Heart right ventricle (tissue), 16 donors: ENCODE measurements at regions of chr4 and their contacts with region 1.

Region 1: DNA sequence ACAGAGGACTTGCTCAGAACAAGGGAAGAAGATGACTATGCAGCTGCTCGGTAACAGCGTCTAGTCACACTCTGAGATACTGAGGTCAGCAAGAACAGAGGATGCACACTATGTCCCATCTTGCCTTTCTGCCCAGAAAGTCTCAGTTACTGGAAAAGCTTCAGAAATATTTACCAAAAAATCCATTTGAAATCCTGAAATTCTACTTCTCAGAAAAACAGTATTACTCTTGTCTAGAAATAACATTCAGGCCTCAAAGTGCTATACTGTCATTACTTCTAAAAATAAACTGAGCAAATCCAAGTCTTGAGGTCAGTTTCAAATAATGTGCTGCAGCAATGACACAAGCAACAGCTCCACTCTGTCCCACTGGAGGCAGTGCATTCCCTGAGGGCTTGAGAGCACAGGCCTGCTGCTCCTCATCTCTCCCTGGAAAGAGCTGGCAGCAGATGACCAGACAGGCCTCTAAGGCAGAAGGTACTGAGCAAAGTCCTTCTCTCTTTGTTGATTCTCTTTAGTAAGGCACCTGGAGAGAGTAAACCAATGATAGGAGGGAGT is 76.9 kb downstream of the CAMK2D start:
- DNase-seq: peak; percentile 54 to 85
- ATAC-seq: peak; percentile 93 to 98 (median 94)
- H3K4me3 ChIP-seq: no peak overlapping the region
- H3K27ac ChIP-seq: peak overlapping the region; percentile 36 to 86 (median 74)
- H3K4me1 ChIP-seq: peaks cover 0 to 75% (median 52%) of the 10 kb centered on the region in 9 donors
- H3K27me3 ChIP-seq: no peaks in the 10 kb centered on the region
- CTCF ChIP-seq: peak in 8 of 9 donors; percentile 16 to 62 (median 44)

Region 2: DNA sequence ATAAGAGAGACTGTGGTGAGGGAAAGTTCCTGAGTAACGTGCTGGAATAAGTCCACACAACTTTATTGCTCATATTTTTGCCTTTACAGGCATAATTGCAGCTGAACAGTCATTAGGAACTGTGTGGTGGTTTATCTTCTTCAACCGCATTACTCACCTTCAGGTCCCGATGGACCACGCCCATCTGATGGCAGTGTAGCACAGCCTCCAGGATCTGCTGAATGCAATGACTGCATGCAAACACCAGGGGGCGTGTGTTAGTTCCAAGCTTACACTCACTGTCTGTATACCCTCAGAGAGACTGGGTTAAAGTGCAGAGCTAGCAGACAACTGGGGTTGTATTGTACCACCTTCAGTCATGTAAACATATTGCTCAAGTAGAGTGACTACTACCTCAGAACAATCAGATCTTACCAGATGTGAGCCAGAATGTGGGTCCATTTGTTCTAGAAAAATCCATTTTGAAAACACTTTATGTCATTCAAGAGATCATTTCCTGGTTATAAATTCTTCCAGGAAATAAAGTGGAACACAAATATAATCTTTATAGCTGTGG is 137.0 kb before region 1 on chr4:
- intact Hi-C with region 1: loop called in 4 of 10 experiments (anchors 5 to 10 kb)
- DNase-seq: peak; percentile 74 to 88
- ATAC-seq: peak; percentile 93 to 99 (median 98)
- H3K4me3 ChIP-seq: no peak overlapping the region
- H3K27ac ChIP-seq: peak overlapping the region in 9 of 10 donors; percentile 20 to 74 (median 47)
- H3K4me1 ChIP-seq: peaks cover 0 to 22% (median 13%) of the 10 kb centered on the region in 9 donors
- H3K27me3 ChIP-seq: no peaks in the 10 kb centered on the region
- CTCF ChIP-seq: peak; percentile 87 to 99 (median 98)

Region 3: DNA sequence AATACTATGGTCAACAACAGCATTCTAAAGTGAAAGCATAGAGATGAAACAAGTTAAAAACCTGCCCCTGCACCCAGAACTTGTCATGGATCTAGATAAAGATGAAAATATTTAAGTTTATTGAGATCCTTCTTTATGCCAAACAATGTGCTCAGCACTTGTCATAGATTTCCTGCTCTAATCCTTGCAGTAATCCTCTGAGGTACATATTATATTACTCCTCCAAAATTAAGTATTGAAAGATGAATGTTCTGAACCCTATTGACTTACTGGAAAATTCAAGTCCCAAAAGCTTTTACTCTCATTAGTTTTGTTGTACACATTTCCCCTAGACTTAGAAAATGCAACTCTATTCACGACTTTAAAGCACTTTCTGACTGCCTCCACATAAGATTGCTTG is 41.4 kb after region 1 on chr4:
- intact Hi-C with region 1: loop called in 2 of 10 experiments (anchors 5 to 10 kb)
- DNase-seq: no peak
- ATAC-seq: no peak
- H3K4me3 ChIP-seq: no peak overlapping the region
- H3K27ac ChIP-seq: no peak overlapping the region
- H3K4me1 ChIP-seq: peaks cover 0 to 71% (median 31%) of the 10 kb centered on the region in 9 donors
- H3K27me3 ChIP-seq: no peaks in the 10 kb centered on the region
- CTCF ChIP-seq: no peak

Region 4: DNA sequence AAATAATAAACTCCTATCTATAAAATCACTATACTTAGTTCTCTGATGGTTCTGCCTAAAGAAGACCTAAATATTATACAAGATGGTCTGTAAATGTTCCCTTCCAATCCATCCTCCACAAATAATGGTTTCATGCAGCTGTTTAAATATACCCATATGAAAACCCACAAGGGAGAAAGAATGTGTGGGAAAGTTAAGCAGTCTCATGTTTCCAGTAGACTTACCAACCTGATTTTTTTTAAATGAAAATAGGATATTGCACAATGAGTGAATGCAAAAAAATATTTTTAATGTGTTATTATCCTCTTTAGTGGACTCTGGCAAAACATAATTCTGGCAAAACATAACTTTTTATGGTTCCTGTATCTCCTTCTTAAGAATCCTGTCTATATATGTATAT is 53.6 kb after region 1 on chr4:
- intact Hi-C with region 1: loop called in 1 of 10 experiments (anchors 10 kb)
- DNase-seq: no peak
- ATAC-seq: peak in 3 of 8 donors; percentile 13 to 45 (median 30)
- H3K4me3 ChIP-seq: no peak overlapping the region
- H3K27ac ChIP-seq: peak overlapping the region in 6 of 10 donors; percentile 1 to 48 (median 20)
- H3K4me1 ChIP-seq: peaks cover 0 to 76% (median 48%) of the 10 kb centered on the region in 9 donors
- H3K27me3 ChIP-seq: no peaks in the 10 kb centered on the region
- CTCF ChIP-seq: no peak

Region 5: GRCh38 chr4:113756005-113756410 is 71.4 kb after region 1 on chr4:
- intact Hi-C with region 1: loop called in 6 of 10 experiments (anchors 2 to 10 kb)
- DNase-seq: no peak
- ATAC-seq: no peak
- H3K4me3 ChIP-seq: no peak overlapping the region
- H3K27ac ChIP-seq: peak overlapping the region in 1 of 10 donors; percentile 0
- H3K4me1 ChIP-seq: peaks cover 0 to 70% (median 61%) of the 10 kb centered on the region in 9 donors
- H3K27me3 ChIP-seq: no peaks in the 10 kb centered on the region
- CTCF ChIP-seq: no peak